Activated CD8-positive, alpha-beta T cell treated with anti-CD3 and anti-CD28 coated beads for 36 hours (primary cell): ENCODE measurements at regions of chr14 and their contacts with region 1.

Region 1: DNA sequence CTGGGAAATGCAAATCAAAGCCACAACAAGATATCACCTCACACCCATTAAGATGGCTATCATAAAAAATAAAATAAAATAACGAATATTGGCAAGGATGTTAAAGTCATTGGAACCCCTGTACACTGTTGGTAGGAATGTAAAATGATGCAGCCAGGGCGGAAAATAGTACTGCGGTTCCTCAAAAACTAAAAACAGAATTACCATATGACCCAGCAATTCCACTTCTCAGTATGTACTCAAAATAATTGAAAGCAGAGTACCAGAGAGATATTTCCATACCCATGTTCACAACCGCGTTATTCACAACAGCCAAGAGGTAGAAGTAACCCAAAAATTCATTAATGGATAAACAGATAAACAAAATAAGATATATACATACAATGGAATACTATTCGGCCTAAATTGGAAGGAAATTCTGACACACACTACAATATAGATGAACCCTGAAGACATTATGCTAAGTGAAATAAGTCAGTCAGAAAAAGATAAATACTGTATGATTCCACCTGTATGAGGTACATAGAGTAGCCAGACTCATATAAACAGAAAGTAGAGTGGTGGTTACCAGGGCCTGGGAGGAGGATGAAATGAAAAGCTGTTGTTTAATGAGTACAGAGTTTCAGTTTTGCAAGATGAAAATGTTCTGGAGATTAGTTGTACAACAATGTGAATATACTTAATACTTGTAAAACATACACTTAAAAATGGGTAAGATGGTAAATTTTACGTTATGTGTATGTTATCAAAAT is 84.6 kb downstream of the TXNDC16 start:
- DNase-seq: peak; percentile 20
- ATAC-seq: peak; percentile 78
- H3K4me3 Mint-ChIP-seq: no peak overlapping the region
- H3K27ac Mint-ChIP-seq: no peak overlapping the region
- H3K4me1 Mint-ChIP-seq: peaks cover 9% of the 10 kb centered on the region
- H3K27me3 Mint-ChIP-seq: no peaks in the 10 kb centered on the region
- CTCF ChIP-seq: no peak

Region 2: GRCh38 chr14:52325126-52325525 is 142.6 kb before region 1 on chr14:
- CTCF ChIA-PET with region 1: interaction called, 3 read pairs
- POLR2A ChIA-PET with region 1: no interaction called
- intact Hi-C with region 1: loop called (anchors 2 kb)
- DNase-seq: peak; percentile 62
- ATAC-seq: peak; percentile 89
- H3K4me3 Mint-ChIP-seq: peak overlapping the region; percentile 13
- H3K27ac Mint-ChIP-seq: peak overlapping the region; percentile 74
- H3K4me1 Mint-ChIP-seq: peaks cover 62% of the 10 kb centered on the region
- H3K27me3 Mint-ChIP-seq: no peaks in the 10 kb centered on the region
- CTCF ChIP-seq: no peak

Region 3: GRCh38 chr14:52446355-52446754 is 21.3 kb before region 1 on chr14:
- CTCF ChIA-PET with region 1: no interaction called
- POLR2A ChIA-PET with region 1: no interaction called
- intact Hi-C with region 1: no loop called
- DNase-seq: no peak
- ATAC-seq: no peak
- H3K4me3 Mint-ChIP-seq: no peak overlapping the region
- H3K27ac Mint-ChIP-seq: no peak overlapping the region
- H3K4me1 Mint-ChIP-seq: no peaks in the 10 kb centered on the region
- H3K27me3 Mint-ChIP-seq: no peaks in the 10 kb centered on the region
- CTCF ChIP-seq: no peak